ENCODE measurements at regions of chr10 and their contacts with region 1.

Region 1: DNA sequence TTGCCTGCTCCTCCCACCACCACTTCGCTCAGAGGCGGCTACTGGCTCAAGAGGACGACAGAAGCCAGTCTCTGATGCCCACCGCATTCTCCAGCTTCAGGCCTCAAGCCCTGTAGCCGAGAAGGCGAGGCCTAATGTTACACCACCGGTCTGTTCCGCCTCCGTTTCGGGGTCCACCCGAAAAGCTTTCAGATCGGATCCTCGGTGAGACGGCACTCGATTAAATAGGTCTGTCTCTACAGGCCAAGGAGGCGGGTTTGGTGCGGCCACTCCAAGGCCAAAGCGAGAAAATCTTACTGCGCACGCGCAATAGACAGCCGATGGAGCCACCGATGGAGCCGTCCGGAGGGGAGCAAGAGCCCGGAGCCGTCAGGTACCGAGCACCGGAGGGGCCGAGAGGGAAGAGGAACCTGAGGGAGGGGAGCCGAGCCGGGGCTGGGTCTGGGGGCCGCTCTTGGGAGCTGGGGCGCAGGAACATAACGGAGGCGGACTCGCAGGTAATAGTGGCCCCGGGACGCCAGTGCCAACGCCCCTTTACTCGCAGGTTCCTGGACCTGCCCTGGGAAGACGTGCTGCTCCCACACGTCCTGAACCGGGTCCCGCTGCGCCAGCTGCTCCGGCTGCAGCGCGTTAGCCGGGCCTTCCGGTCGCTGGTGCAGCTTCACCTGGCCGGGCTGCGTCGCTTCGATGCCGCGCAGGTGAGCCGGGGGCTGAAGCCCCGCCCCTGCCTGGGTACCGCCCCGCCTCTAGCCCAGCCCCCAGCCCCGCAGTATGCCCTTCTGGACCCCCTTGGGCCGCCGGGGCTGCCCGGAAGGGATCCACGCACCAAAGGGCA is at the start of gene FBXL15:
- DNase-seq: peak; percentile 98
- H3K4me3 Mint-ChIP-seq: peak within 1 kb of the TSS; percentile 95
- H3K27ac Mint-ChIP-seq: peak within 1 kb of the TSS; percentile 91
- H3K4me1 Mint-ChIP-seq: peaks cover 30% of the 10 kb centered on the region
- H3K27me3 Mint-ChIP-seq: peaks cover 20% of the 10 kb centered on the region
- total RNA-seq, gene FBXL15: 9.9 to 10.8 TPM

Region 2: DNA sequence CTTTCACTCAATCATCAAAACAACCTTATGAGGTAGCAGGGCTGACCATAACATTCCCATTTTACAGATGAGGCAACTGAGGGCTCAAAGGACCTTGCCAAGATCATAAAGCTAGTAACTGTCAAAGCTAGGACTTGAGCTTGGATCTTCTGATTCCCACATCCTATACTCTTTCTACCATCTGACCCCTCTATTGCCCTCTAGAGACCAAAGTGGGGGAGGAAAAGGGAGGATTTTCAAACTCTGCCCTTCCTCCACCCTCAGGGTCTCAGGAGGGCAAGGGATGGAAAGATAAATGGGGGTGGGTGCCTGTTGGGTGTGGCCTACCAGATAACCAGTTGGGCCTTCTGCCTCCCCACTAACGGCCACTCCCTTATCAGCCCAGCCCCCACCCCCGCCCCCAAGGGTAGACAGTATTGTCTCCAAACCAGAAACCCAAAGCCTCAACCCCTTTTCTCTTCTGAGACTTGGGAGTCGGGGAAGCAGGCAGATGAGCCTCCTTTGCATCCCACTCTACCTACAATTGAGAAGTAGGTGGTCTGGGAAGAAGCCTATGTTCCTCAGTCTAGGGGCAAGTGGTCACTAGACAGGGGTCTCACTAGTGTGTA is 308.7 kb before region 1 on chr10:
- CTCF ChIA-PET with region 1: no interaction called
- intact Hi-C with region 1: no loop called
- DNase-seq: no peak
- H3K4me3 Mint-ChIP-seq: no peak overlapping the region
- H3K27ac Mint-ChIP-seq: no peak overlapping the region
- H3K4me1 Mint-ChIP-seq: peaks cover 39% of the 10 kb centered on the region
- H3K27me3 Mint-ChIP-seq: no peaks in the 10 kb centered on the region

Region 3: DNA sequence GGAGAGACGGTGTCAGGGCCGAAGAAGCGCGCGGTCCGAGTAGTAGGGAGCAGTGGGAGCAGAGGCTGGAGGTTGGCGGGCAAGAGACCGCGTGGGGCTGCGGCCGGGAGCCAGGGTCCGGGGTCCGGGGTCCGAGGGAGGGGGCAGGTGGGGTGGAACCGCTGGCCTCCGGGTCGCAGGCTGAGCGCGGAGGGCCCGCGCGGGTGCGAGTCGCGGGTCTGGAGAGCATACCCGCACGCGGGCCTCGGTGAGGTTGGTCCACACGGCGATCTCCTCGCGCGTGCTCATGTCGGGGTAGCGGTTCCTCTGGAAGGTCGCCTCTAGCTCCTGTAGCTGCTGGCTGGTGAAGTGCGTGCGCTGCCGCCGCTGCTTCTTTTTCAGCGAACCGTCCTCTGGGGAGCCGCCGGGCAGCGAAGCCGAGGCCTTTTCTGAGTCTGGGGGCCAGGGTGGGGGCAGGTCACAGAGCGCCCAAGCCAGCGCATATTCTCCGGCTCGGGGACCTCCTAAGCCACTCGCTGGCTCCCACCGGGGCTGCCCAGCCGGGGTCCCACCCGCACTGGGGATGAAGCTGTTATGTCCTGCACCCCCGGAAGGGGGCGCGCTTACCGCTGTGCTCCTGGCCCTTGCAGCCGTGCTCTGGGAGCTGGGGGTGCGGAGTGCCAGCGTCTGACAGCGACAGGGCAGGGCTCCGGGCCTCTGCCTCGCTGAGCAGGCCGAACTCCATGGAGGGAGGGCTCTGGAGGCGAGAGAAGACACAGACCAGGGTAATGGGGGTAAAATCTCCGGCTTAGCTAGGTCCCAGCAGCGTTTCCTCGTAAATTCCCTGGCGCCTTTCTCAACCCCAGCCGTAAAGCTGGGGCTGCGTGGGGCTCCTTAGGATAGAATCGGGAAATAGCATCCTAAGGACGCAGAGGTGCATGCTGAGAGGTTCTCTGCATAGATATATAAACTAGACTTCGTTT is 189.4 kb before region 1 on chr10:
- CTCF ChIA-PET with region 1: interaction called, 49 read pairs
- intact Hi-C with region 1: loop called (anchors 1 kb)
- DNase-seq: peak; percentile 78
- H3K4me3 Mint-ChIP-seq: peak overlapping the region; percentile 60
- H3K27ac Mint-ChIP-seq: no peak overlapping the region
- H3K4me1 Mint-ChIP-seq: peaks cover 4% of the 10 kb centered on the region
- H3K27me3 Mint-ChIP-seq: peaks cover 52% of the 10 kb centered on the region

Region 4: DNA sequence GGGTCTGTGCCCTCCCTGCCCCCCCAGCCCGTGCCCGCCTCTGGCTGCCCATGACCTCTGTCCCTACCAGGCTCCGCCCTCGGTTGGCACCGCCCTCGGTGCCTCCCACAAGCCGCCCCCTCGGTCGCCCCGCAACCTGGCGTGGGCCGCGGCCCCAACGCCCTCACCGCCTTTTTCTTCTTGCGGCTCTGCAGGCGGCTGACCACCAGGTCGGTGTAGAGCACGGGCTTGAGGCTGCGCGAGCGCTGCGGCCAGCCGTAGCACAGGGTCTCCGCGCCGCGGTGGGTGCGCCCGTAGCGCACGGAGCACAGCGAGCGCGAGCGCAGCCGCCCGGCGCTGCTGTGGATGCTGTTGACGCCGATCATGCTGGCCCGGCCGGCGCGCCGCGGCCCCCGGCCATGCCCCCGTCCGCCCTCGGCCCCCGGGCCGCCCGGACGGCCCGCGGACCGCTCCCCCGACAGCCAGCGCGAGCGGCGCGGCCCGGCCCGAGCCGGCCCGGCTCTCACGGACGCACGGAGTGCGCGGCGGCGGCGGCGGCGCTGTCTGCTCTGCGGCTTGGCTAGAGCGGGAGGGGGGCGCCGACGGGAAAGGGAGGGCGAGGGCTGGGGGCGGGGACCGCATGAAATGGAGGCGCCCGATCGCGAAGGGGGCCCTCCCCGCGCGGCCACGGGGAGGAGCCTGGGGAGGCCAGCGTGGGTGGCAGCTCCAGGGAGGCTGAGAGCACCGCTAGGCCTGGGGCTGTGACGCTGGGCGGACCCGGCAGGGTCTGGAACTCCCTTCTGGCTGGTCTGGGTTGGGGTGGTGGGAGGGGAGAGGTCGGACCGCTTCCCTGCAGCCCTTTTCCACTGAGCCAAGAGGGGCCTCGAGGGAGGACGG is 12.1 kb before region 1 on chr10:
- CTCF ChIA-PET with region 1: interaction called, 12 read pairs
- intact Hi-C with region 1: loop called (anchors 1 kb)
- DNase-seq: peak; percentile 85
- H3K4me3 Mint-ChIP-seq: peak overlapping the region; percentile 74
- H3K27ac Mint-ChIP-seq: no peak overlapping the region
- H3K4me1 Mint-ChIP-seq: peaks cover 28% of the 10 kb centered on the region
- H3K27me3 Mint-ChIP-seq: no peaks in the 10 kb centered on the region

Region 5: DNA sequence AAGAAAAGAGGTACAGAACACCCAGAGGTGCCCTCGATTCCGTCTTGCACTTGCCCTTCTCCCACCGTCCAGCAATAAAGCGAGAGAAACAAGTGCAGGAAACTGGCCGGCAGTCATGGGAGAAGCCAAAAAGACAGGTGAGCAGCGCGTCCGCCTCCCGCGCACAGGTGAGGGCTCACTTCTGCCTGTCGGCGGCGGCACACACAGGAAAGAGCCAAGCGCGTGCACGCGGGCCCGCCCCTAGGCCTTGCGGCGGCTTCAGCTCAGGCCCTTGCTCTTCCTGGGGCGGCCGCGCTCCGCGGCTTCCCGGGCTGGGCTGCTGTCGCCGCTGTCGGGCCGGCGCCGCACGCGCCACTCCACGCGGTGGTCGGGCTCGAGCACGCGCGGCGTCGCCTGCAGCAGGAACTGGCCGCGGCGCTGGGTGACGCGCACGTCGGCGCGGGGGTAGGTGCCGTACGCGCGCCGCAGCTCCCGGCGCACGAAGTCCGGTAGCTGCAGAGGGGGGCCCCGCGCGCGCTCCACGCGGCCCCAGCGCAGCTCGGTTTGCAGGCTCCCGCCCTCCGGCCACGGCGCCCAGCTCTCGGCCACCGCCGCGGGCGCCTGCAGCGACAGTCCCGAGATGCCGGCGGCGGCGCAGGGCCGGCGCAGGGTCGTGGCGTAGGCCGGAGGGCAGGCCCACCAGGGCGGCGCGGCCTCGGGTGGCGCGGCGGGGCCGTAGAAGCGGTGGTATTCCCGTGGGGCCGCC is 29.3 kb after region 1 on chr10:
- CTCF ChIA-PET with region 1: interaction called, 26 read pairs
- intact Hi-C with region 1: loop called (anchors 1 kb)
- DNase-seq: peak; percentile 82
- H3K4me3 Mint-ChIP-seq: peak overlapping the region; percentile 96
- H3K27ac Mint-ChIP-seq: peak overlapping the region; percentile 96
- H3K4me1 Mint-ChIP-seq: peaks cover 27% of the 10 kb centered on the region
- H3K27me3 Mint-ChIP-seq: no peaks in the 10 kb centered on the region

Region 6: DNA sequence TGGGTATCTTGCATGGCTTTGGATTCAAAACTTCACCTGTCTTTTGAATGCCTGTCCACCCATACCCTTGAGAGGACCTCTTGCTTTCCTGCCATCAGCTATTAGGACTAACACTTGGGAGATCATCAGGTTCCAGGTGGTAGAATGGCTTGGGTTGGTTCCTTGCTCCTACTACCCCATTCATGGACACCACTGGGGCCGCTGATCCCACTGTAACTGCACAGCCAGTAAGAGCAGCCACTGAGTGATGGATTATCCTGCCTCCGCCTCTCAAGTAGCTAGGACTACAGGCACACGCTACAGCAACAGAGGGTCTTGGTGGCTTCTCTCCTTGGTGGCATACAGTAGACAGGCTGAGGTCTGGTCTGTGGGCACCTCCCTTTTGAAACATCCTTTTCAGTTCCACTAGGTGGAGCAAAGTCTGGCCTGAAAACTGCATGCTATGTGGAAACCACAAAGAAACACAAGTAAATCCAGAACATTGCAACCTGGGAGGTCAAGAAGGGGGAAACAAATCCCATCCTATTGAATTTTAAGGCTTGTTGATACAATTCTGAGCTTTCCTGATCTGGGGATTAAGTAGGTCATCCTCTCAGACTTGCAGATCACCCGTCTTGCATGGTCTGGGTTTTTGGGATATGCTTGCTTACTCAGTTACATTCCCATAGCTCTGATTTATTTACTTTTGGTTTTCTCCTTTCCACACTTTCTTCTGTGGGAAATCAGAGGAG is 332.1 kb after region 1 on chr10:
- CTCF ChIA-PET with region 1: no interaction called
- intact Hi-C with region 1: no loop called
- DNase-seq: peak; percentile 45
- H3K4me3 Mint-ChIP-seq: no peak overlapping the region
- H3K27ac Mint-ChIP-seq: no peak overlapping the region
- H3K4me1 Mint-ChIP-seq: peaks cover 39% of the 10 kb centered on the region
- H3K27me3 Mint-ChIP-seq: no peaks in the 10 kb centered on the region